ENCODE measurements at regions of chr7 and their contacts with region 1.

Region 1: DNA sequence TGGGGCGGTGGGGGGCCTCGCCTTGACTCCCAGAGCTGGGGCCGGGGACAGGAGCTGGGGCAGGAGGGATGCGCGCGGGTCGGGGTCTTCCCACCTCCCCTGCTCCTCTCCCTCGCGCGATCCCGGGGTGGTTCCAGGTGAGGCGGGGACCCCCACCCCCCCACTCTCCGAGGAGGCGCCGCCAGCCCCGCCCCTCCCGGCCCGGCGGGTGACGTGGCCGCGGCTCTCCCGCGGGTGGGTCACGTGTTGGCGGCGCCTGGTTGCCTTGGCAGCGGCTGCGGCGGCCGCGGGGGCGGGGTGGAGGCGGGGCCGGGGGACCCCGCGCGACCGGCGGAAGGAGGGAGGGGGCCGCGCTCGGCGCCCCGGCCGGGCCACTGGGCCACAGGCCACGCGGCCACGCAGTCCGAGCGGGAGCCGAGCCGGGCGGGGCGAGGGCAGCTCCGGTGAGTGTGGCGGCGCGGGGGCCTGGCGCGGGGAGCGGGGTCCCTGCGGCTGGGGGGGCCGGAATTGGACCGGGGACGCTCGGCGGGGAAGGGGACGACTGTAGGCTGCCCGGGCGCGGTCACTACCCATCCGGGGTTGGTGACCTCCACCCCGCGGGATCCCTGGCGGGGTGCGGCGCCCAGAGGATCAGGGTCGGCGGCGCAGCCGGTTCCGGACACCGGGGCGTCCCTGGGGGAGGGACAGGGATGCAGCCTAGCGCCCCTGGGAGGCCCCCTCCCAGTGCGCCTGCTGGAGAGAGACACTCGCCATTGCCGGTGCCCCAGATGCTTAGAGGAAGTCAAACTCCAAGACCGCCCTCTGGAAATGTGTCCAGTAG is at the start of gene ORAI2:
- DNase-seq: peak in 1 of 2 experiments; percentile 80
- H3K4me3 ChIP-seq: peak within 1 kb of the TSS; percentile 84
- H3K27ac ChIP-seq: no peak within 1 kb of the TSS
- H3K4me1 ChIP-seq: 0 out of 2 replicates have a peak, but pooled peaks cover 6% of the 10 kb centered on the region
- H3K27me3 ChIP-seq: no peaks in the 10 kb centered on the region
- CTCF ChIP-seq: no peak
- total RNA-seq, gene ORAI2: 53.3 and 59.7 TPM in 2 replicates

Region 2: DNA sequence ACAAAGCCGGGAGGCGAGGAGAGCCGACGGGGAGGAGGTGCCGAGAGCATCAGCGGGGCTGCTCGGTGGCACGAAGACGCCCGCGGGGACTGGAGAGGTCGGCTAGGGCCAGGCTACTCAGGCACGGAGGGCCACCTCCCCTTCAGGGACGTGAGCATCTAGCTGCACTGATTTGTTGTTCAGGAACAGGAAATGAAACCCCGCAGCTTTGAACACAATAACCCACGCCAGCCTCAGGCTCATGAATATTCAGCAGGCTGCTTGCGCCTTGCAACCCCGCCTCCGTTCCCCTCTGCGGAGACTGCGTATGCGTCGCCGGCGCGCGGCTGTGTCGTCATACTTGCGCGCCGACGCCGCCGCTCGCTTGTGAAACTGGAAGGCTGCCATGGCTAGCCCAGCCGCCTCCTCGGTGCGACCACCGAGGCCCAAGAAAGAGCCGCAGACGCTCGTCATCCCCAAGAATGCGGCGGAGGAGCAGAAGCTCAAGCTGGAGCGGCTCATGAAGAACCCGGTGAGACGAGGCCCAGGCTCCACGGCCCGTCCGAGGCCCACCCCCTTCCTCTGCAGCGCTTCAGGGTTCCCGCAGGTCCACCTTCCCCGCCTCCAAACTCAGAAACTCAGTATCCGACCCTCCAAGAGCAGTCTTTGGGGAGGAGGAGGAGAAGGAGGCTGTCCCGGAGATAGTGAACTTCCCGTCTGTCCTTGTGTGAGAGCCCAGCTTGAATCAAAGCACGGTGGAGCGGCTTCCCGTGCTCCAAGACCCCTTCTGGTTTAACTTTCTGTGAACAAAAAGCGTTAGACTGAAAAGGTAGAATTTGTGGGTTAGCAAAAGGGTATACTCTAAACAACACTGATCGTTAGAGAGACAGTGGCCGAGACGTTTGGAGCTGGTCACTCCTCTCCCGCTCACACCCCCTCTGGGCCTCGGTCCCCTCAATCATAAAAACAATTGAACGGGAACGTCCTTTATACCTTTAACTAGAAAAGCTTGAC is 37.1 kb before region 1 on chr7 and contains the start of gene PRKRIP1:
- CTCF ChIA-PET with region 1: interaction called, 14 read pairs
- POLR2A ChIA-PET with region 1: no interaction called
- intact Hi-C with region 1: no loop called
- DNase-seq: peak; percentile 91 to 94
- H3K4me3 ChIP-seq: peak within 1 kb of the TSS; percentile 86
- H3K27ac ChIP-seq: peak within 1 kb of the TSS; percentile 64
- H3K4me1 ChIP-seq: peaks cover 38% of the 10 kb centered on the region
- H3K27me3 ChIP-seq: no peaks in the 10 kb centered on the region
- CTCF ChIP-seq: no peak
- total RNA-seq, gene PRKRIP1: 34.6 and 43.1 TPM in 2 replicates

Measured in PC-9 (cell line).